Activated CD8-positive, alpha-beta memory T cell treated with anti-CD3 and anti-CD28 coated beads, Interleukin-2, amount 10 ng/mL, durations not matched to agents 7 days and 5 days (primary cell): ENCODE measurements at regions of chr20 and their contacts with region 1.

Region 1: DNA sequence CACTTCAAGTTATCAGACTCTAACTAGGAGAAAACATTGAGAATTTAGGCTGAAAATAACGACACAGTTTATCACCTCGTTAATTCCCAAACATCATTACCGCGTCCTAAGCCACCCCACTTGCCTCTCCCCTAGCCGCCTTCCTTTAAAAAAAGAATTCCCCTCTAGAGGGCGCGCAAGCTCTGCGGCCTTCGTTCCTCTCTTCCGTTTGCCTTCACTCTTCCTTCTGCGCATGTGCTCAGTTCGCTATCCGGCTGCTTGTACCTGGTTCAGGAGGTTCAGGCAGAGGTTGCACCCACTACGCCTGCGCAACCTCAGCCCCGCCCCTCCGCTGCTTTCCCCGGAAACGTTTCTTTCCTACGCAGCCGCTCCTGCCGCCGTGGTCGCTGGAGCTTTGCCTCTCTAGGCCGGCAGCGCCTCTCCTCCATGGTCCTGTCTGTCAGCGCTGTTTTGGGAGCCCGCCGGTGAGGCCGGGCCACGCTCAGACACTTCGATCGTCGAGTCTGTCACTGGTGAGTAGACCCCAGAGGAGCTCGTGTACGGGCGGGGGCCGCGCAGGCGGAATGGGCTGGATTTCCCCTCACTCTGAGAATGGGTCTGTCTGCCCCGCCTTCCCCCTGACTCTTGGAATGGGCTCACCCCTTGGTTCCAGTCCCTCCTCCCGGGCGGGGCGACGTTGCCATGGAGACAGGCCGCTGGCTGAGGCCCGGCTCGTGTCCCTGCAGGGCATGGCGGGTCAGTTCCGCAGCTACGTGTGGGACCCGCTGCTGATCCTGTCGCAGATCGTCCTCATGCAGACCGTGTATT is at the start of gene SYS1:
- DNase-seq: peak; percentile 99
- ATAC-seq: peak; percentile 92
- H3K4me3 Mint-ChIP-seq: peak within 1 kb of the TSS; percentile 100
- H3K27ac Mint-ChIP-seq: peak within 1 kb of the TSS; percentile 97
- H3K4me1 Mint-ChIP-seq: peaks cover 52% of the 10 kb centered on the region
- H3K27me3 Mint-ChIP-seq: peaks cover 3% of the 10 kb centered on the region
- total RNA-seq, gene SYS1: 19.6 to 24.9 TPM

Region 2: DNA sequence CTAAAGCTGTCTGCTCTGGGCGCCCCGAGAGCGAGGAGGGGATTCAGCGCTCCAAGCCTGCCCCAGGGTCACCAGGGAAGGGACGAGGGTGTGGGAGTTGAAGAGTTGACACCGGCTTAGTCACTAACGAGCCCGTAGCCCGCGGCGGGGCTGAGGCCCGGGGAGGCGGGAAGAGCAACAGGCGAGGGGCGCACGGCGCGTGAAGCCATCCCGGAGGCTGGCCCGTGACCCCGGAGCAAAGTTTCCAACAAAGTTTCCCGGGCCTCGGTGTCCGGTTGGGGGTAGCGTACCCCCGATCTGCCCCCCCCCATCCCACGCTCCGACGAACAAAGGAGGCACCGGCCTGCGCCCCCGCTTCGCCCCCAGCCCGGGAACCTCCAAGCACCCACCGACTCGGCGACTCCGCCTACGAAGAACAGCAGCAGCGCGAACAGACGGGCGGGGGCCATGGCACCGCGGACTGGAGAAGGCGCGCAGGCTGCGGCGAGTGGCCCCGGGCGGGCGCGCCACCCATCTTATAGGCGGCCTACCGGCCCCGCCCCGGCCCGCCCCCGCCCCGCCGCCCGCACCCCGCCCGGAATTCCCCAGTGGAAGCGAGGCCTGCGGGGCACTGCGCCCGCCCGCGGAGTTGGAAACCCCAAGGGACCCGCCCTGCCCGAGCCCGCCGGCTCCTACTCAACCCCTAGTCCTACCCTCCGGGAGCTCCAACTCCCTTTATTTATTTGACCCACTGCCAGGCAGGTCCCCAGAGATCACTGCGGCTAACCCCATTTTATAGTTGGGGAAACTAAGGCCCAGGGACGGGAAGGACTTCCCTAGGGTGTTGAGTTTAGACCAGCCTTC is 14.8 kb before region 1 on chr20 and contains the start of gene SDC4:
- CTCF ChIA-PET with region 1: interaction called, 39 read pairs
- DNase-seq: peak; percentile 72
- ATAC-seq: peak; percentile 91
- H3K4me3 Mint-ChIP-seq: peak within 1 kb of the TSS; percentile 77
- H3K27ac Mint-ChIP-seq: peak within 1 kb of the TSS; percentile 67
- H3K4me1 Mint-ChIP-seq: peaks cover 40% of the 10 kb centered on the region
- H3K27me3 Mint-ChIP-seq: no peaks in the 10 kb centered on the region
- total RNA-seq, gene SDC4: 15.0 to 50.7 TPM

Region 3: GRCh38 chr20:45415774-45416637 is 53.0 kb after region 1 on chr20 and contains the start of gene PIGT:
- CTCF ChIA-PET with region 1: interaction called, 14 read pairs
- DNase-seq: peak; percentile 93
- ATAC-seq: peak; percentile 94
- H3K4me3 Mint-ChIP-seq: peak within 1 kb of the TSS; percentile 91
- H3K27ac Mint-ChIP-seq: peak within 1 kb of the TSS; percentile 92
- H3K4me1 Mint-ChIP-seq: peaks cover 49% of the 10 kb centered on the region
- H3K27me3 Mint-ChIP-seq: no peaks in the 10 kb centered on the region
- total RNA-seq, gene PIGT: 68.0 to 79.2 TPM

Region 4: GRCh38 chr20:45450097-45450818 is 87.3 kb after region 1 on chr20:
- CTCF ChIA-PET with region 1: interaction called, 100 read pairs
- DNase-seq: no peak
- ATAC-seq: peak; percentile 34
- H3K4me3 Mint-ChIP-seq: no peak overlapping the region
- H3K27ac Mint-ChIP-seq: no peak overlapping the region
- H3K4me1 Mint-ChIP-seq: peaks cover 15% of the 10 kb centered on the region
- H3K27me3 Mint-ChIP-seq: peaks cover 8% of the 10 kb centered on the region

Region 5: DNA sequence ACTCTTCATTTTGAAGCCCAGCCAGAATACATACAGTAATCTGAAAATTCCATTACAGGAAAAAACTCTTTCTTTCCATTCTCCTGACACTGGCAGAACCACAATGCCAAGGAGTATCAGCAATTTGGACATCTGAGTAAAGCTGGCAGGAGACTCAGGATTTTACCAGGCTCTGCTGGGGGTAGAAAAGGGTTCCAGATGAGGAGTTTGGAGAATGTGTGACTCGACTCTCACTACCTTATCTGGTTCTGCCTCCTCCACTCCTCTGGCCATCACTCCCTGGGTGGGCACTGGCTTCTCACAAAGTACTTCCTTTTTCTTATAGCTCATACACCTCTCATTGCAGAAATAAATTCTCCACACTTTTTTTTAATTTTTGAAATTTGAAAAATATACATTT is 226.7 kb after region 1 on chr20:
- CTCF ChIA-PET with region 1: no interaction called
- DNase-seq: no peak
- ATAC-seq: no peak
- H3K4me3 Mint-ChIP-seq: no peak overlapping the region
- H3K27ac Mint-ChIP-seq: no peak overlapping the region
- H3K4me1 Mint-ChIP-seq: no peaks in the 10 kb centered on the region
- H3K27me3 Mint-ChIP-seq: peaks cover 35% of the 10 kb centered on the region